AG04450 (cell line): ENCODE measurements at regions of chr2 and their contacts with region 1.

Region 1: DNA sequence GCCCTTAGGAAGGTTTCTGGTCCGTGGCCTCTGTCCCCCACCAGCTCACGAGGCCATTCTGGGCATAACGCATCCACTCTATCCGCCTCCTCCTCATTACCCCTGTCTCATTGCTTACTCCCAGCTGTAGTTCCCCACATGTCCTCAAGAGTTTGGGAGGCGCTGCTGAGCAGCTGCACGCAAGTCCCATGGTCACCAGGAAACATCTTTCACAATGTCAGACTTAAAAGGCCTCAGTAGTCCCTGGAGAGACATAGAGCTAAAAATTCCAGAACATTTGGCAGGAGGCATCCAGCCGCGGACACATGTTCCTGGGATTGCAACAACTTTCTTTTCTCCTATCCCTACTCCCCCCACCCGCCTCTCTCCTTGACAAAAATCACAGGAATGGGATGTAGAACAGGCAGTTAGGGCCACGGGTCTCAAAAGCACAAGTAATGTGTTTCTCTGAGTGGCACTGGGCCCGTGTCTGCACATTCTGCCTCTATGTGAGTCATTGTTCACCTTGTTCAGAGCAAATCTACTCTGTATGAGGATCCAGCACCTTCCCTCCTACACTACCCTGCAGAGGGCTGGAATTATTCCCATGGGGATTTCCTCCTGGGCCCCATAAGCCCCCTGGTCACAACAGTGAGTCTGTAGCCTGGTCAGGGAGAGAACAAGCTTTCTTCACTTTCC is 8.1 kb downstream of the LBH start:
- DNase-seq: no peak
- H3K4me3 ChIP-seq: no peak overlapping the region
- H3K27ac ChIP-seq: peak overlapping the region; percentile 63
- H3K27me3 ChIP-seq: no peaks in the 10 kb centered on the region
- CTCF ChIP-seq: peak; percentile 93

Region 2: GRCh38 chr2:30287857-30288513 is 48.5 kb after region 1 on chr2:
- CTCF ChIA-PET with region 1: interaction called, 12 read pairs
- POLR2A ChIA-PET with region 1: interaction called, 9 read pairs
- DNase-seq: no peak
- H3K4me3 ChIP-seq: no peak overlapping the region
- H3K27ac ChIP-seq: no peak overlapping the region
- H3K27me3 ChIP-seq: no peaks in the 10 kb centered on the region
- CTCF ChIP-seq: no peak

Region 3: DNA sequence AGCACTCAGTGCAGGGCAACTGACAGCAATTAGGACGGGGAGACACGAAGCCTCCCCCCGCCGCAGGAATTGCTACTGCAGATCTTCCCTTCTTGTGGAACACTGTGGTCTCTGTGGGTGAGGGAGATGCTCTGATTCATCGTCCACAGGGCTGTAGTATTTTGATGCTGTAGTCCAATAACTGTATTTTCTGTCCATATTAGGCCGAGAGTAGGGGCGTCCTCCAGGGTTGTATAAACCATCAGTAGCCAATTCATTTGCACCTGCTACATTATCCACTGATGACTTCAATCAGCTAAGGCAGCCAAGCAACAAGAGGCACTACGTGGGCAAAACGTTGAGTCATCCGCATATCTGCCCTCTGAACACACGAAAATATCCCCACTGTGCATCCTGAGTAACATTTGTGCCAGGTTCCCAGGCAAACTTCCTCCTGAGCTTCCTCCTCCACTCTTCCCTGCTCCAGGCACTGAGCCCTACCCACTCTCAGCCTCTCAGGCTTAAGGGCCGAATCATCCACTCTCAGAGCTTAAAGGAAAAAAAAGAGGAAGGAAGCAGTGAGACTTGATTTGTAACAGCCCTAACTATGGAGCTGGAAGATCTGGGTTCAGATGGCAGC is 54.0 kb after region 1 on chr2:
- CTCF ChIA-PET with region 1: interaction called, 12 read pairs
- POLR2A ChIA-PET with region 1: interaction called, 10 read pairs
- DNase-seq: peak; percentile 98
- H3K4me3 ChIP-seq: no peak overlapping the region
- H3K27ac ChIP-seq: peak overlapping the region; percentile 96
- H3K27me3 ChIP-seq: no peaks in the 10 kb centered on the region
- CTCF ChIP-seq: no peak

Region 4: GRCh38 chr2:30447149-30448045 is 207.9 kb after region 1 on chr2 and contains the start of gene LCLAT1:
- CTCF ChIA-PET with region 1: no interaction called
- POLR2A ChIA-PET with region 1: interaction called, 13 read pairs
- DNase-seq: no peak
- H3K4me3 ChIP-seq: peak within 1 kb of the TSS; percentile 92
- H3K27ac ChIP-seq: peak within 1 kb of the TSS; percentile 69
- H3K27me3 ChIP-seq: no peaks in the 10 kb centered on the region
- CTCF ChIP-seq: peak; percentile 18; the same call in 1 of the 2 replicates
- polyA plus RNA-seq, gene LCLAT1: 19.5 and 25.2 TPM in 2 replicates